Activated CD8-positive, alpha-beta T cell treated with anti-CD3 and anti-CD28 coated beads, Interleukin-2, amount 10 ng/mL, durations not matched to agents 7 days and 5 days (primary cell): ENCODE measurements at regions of chr9 and their contacts with region 1.

Region 1: DNA sequence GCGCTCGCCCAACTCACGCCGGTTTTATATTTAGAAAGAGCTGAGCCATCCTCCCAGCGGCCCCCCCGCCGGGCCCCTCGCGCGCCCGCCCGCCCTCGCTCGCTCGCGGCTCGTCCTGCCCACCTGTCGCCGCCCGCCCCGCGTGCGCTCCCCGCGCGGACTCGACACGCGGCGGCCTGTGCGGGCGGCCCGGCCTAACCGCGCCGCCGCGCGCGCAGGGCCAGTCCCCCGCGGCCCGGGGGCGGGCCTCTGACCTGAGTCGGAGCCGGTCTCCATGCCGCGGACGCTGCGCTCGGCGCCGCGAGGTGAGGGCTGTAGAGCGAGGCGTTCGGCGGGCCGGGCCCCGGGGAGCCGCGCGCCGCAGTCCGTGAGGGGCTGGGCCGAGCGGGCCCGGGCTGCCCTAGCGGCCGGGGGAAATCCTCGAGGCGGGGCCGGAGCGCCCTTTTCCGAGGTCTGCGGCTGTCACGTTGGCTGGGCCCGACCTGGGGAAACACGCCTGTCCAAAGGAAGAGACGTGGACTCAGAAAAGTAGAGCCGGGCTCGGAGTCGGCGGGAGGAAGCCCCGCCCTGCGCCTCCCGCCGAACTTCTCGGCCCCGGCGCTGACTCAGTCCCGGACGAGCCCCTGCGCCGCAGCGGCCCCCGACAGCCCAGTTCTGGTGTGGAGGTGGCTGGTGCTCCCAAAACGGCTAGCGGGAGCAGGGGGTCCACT is at the start of gene ECPAS:
- DNase-seq: peak; percentile 71
- ATAC-seq: peak; percentile 77
- H3K4me3 Mint-ChIP-seq: peak within 1 kb of the TSS; percentile 87
- H3K27ac Mint-ChIP-seq: peak within 1 kb of the TSS; percentile 93
- H3K4me1 Mint-ChIP-seq: peaks cover 24% of the 10 kb centered on the region
- H3K27me3 Mint-ChIP-seq: peaks cover 4% of the 10 kb centered on the region
- total RNA-seq, gene ECPAS: 55.9 to 59.1 TPM

Region 2: GRCh38 chr9:111467778-111468367 is 16.1 kb before region 1 on chr9:
- CTCF ChIA-PET with region 1: no interaction called
- POLR2A ChIA-PET with region 1: interaction called, 12 read pairs
- DNase-seq: no peak
- ATAC-seq: no peak
- H3K4me3 Mint-ChIP-seq: no peak overlapping the region
- H3K27ac Mint-ChIP-seq: no peak overlapping the region
- H3K4me1 Mint-ChIP-seq: peaks cover 9% of the 10 kb centered on the region
- H3K27me3 Mint-ChIP-seq: no peaks in the 10 kb centered on the region